Mammary epithelial cell (primary cell): ENCODE measurements at regions of chr7 and their contacts with region 1.

Region 1: DNA sequence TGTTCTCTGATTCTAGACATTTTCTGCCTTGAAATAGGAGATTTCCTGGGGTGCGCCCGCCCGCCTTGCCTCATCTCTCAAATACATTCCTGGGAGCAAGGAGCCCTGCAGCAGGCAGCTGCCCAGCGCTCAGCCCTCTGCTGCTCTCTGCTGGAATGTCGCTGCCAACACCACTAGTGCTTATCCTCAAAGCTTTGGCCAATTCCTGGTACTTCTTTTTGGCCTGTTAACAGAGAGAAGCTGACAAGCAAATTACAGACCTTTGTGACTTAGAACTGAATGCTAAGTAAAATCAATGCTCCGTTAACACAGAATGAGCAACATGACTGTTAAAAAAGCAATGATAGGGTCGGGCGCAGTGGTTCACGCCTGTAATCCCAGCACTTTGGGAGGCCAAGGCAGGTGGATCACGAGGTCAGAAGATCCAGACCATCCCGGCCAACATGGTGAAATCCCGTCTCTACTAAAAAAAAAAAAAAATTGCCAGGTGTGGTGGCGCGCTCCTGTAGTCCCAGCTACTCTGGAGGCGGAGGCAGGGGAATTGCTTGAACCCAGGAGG is 41.9 kb upstream of the SYPL1 start:
- DNase-seq: peak; percentile 62
- H3K4me3 ChIP-seq: no peak overlapping the region
- H3K27ac ChIP-seq: no peak overlapping the region
- H3K4me1 ChIP-seq: peaks cover 9% of the 10 kb centered on the region
- H3K27me3 ChIP-seq: no peaks in the 10 kb centered on the region
- CTCF ChIP-seq: peak; percentile 93 to 99

Region 2: GRCh38 chr7:105759670-105760550 is 394.1 kb before region 1 on chr7:
- CTCF ChIA-PET with region 1: no interaction called
- dilution Hi-C with region 1: no loop called
- in situ Hi-C with region 1: loop called (anchors 25 kb)
- intact Hi-C with region 1: loop called (anchors 2 kb)
- DNase-seq: peak; percentile 37
- H3K4me3 ChIP-seq: no peak overlapping the region
- H3K27ac ChIP-seq: no peak overlapping the region
- H3K4me1 ChIP-seq: no peaks in the 10 kb centered on the region
- H3K27me3 ChIP-seq: no peaks in the 10 kb centered on the region
- CTCF ChIP-seq: peak; percentile 60 to 68

Region 3: DNA sequence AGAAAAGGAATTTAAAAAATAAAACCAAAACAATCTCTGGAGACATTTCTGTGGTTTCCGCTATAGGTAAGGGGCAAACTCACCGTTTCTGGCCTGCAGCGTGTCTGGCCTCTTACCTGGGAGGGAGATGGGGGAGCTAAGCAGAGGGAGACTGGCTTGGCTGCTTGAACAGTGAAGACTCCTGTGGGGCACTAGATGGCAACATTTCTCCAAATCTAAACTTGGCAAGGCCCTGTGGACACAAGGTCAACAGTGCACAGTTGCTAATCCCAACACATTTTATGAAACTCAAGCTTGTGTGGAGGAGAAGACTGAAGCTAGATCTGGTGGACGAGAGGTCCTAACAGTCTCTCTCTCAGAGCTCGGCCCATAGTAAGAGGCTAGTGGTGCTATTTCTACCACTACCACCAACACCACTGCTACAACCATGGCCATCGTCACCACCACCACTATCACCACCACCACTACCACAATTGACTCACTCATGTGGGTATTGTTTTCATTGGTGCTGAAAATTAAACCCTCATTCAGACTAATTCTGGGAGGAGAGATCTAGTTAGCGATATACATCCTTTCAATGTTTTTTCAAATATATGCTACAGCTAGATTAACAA is 219.3 kb before region 1 on chr7:
- CTCF ChIA-PET with region 1: no interaction called
- dilution Hi-C with region 1: no loop called
- in situ Hi-C with region 1: no loop called
- intact Hi-C with region 1: loop called (anchors 5 kb)
- DNase-seq: peak; percentile 12
- H3K4me3 ChIP-seq: no peak overlapping the region
- H3K27ac ChIP-seq: no peak overlapping the region
- H3K4me1 ChIP-seq: peaks cover 14% of the 10 kb centered on the region
- H3K27me3 ChIP-seq: no peaks in the 10 kb centered on the region
- CTCF ChIP-seq: peak in 1 of 2 donors; percentile 30

Region 4: GRCh38 chr7:105990726-105991453 is 163.1 kb before region 1 on chr7:
- CTCF ChIA-PET with region 1: no interaction called
- dilution Hi-C with region 1: no loop called
- in situ Hi-C with region 1: no loop called
- intact Hi-C with region 1: no loop called
- DNase-seq: no peak
- H3K4me3 ChIP-seq: no peak overlapping the region
- H3K27ac ChIP-seq: no peak overlapping the region
- H3K4me1 ChIP-seq: no peaks in the 10 kb centered on the region
- H3K27me3 ChIP-seq: peaks cover 5% of the 10 kb centered on the region
- CTCF ChIP-seq: no peak

Region 5: GRCh38 chr7:106056513-106057203 is 97.3 kb before region 1 on chr7:
- CTCF ChIA-PET with region 1: interaction called, 4 read pairs
- dilution Hi-C with region 1: no loop called
- in situ Hi-C with region 1: loop called (anchors 5 kb)
- intact Hi-C with region 1: loop called (anchors 1 kb)
- DNase-seq: peak; percentile 53
- H3K4me3 ChIP-seq: no peak overlapping the region
- H3K27ac ChIP-seq: no peak overlapping the region
- H3K4me1 ChIP-seq: peaks cover 39% of the 10 kb centered on the region
- H3K27me3 ChIP-seq: no peaks in the 10 kb centered on the region
- CTCF ChIP-seq: peak; percentile 81 to 93

Region 6: DNA sequence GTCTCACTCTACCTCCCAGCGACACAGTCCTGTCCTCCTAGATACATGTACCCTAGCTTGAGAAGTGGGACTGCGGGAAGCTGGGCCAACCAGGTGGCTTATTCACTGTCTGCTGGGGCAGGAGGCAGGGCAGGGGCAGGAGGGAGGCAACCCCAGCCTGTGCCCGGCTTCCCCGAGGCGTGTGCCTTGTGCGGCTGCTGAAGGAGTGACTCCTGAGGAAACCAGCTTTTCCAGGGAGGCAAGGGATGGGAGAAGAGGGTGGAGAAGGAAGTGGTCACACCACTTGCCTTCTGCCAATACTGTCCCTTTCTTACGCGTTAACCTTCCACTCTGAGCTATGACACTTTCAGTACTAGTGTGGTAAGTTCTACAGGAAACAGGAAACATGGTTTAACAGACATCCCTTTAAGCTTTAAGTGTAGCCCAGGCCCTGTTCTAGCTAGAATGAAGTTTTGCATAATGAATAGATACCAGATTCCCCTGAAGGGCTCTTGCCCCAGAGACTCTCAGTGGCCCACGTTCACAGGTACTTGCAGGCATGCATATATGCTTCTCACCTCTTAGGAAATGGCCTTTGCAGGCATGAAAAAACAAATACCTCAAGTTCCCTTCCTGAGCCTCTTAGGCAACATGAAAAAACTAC is 82.5 kb before region 1 on chr7:
- CTCF ChIA-PET with region 1: no interaction called
- dilution Hi-C with region 1: loop called (anchors 5 kb)
- in situ Hi-C with region 1: no loop called
- intact Hi-C with region 1: no loop called
- DNase-seq: no peak
- H3K4me3 ChIP-seq: no peak overlapping the region
- H3K27ac ChIP-seq: peak overlapping the region; percentile 48
- H3K4me1 ChIP-seq: peaks cover 55% of the 10 kb centered on the region
- H3K27me3 ChIP-seq: no peaks in the 10 kb centered on the region
- CTCF ChIP-seq: no peak

Region 7: GRCh38 chr7:106112117-106112971 is 41.6 kb before region 1 on chr7 and contains the start of gene SYPL1:
- CTCF ChIA-PET with region 1: interaction called, 10 read pairs
- dilution Hi-C with region 1: no loop called
- in situ Hi-C with region 1: no loop called
- intact Hi-C with region 1: loop called (anchors 1 kb)
- DNase-seq: peak; percentile 90
- H3K4me3 ChIP-seq: peak within 1 kb of the TSS; percentile 87 to 98 (median 90)
- H3K27ac ChIP-seq: peak within 1 kb of the TSS; percentile 94
- H3K4me1 ChIP-seq: peaks cover 18% of the 10 kb centered on the region
- H3K27me3 ChIP-seq: no peaks in the 10 kb centered on the region
- CTCF ChIP-seq: no peak
- total RNA-seq, gene SYPL1: 74.3 to 124 TPM

Region 8: DNA sequence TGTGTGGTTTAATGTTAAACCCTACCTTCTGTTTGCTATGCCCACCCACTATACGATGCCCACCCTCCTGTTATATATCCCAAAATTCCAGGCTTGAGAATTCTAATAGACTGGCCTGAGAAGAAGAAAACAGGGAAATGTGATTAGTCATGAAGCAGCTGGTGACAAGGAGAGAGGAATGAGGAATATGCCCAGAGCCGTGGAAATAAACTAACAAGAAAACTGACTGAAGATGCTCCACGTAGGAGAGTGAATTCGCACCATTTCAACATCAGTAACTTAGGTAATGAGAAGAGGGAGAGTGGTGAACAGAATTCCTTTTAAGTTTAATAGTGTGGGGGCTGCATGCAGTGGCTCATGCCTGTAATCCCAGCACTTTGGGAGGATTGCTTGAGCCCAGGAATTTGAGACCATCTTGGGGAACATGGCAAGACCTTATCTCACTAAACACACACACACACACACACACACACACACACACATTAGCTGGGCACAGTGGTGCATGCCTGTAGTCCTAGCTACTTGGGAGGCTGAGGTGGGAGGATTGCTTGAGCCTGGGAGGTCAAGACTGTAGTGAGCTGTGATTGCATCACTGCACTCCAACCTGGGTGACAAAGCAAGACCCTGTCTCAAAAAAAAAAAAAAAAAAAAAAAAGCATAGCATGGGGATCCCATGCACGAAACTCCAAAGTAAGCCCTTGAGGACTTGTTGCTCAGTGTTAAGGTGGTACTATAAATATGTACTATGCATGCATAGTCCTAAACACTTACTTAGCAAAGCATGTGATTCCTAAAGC is 25.8 kb before region 1 on chr7:
- CTCF ChIA-PET with region 1: no interaction called
- dilution Hi-C with region 1: no loop called
- in situ Hi-C with region 1: no loop called
- intact Hi-C with region 1: loop called (anchors 2 kb)
- DNase-seq: no peak
- H3K4me3 ChIP-seq: no peak overlapping the region
- H3K27ac ChIP-seq: no peak overlapping the region
- H3K4me1 ChIP-seq: peaks cover 6% of the 10 kb centered on the region
- H3K27me3 ChIP-seq: no peaks in the 10 kb centered on the region
- CTCF ChIP-seq: no peak